Activated CD4-positive, alpha-beta T cell treated with anti-CD3 and anti-CD28 coated beads, Interleukin-2, amount 10 ng/mL, durations not matched to agents 24 days and 14 days (primary cell): ENCODE measurements at regions of chr18 and their contacts with region 1.

Region 1: DNA sequence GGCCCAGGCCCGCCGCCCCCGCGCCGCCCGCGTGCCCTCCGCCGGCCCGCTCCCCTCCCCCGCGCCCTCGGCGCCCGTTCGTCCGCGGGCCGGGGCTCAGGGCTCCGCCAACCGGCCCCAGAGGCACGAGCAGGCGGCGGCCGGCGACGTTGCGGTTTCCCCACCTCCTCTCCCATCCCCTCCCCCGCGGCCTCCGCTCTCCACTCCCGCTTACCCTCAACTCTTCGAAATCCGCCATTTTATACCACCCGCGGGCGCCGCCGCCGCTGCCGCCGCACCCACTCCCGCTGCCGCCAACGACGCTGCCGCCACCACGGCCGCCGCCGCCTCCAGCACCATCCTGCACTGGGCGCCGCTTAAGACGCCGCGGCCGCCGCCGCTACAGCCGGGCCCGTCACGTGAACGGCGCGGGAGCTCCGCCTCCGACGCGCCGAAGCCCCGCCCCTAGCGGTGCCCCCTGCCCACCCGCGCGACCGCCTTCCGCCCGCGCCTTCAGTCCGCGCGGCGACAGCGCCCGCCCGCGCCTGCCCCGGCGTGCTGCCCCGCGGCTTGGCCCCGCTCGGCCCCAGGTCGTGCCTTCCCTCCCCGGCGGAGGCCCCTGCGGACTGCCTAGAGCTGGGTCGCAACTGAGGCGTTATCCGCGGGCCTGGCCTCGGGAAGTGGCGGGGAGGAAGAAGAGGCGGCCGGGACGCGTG is at the starts of genes KATNAL2 and PIAS2:
- DNase-seq: peak; percentile 93
- H3K4me3 Mint-ChIP-seq: peak within 1 kb of the TSS; percentile 93
- H3K27ac Mint-ChIP-seq: peak within 1 kb of the TSS; percentile 90
- H3K4me1 Mint-ChIP-seq: peaks cover 42% of the 10 kb centered on the region
- H3K27me3 Mint-ChIP-seq: peaks cover 13% of the 10 kb centered on the region
- total RNA-seq, gene KATNAL2: 0.40 TPM in 1 of 2 replicates, not detected in the other
- total RNA-seq, gene PIAS2: 33.9 and 39.3 TPM in 2 replicates

Region 2: DNA sequence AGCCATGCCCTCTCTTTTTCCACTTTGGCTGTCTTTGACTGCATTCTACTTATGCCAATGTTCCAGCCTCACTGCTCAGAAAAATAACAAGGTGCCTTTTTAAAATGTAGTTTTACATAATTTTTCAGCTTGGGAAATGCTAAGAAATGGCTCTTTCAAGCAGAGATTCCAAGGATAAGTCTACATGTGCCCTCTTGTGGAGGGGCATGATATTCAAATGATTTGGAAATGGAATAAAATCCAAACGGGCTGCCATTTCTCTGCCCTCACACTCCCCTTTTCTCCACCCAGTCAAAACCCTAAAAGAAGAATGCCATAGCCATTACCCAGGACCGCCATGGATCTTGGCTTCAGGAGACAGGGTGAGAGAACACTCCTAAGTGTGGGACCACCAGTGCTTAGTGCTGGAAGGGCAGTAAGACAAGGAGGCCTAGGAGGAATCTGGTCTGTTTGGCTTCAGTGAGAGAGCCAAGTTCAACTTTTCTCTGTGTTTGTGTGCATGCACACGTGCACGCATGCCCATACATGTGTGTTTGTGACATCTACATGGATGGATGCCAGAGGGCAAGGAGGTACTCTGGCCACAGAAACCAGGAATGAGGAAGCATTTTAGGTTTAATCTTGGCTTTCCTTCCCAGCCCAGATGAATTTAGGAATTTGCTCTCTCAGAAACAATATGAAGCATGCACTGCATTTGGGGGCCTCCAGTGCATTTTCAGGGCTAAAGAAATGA is 1476.0 kb before region 1 on chr18:
- intact Hi-C with region 1: no loop called
- DNase-seq: no peak
- H3K4me3 Mint-ChIP-seq: no peak overlapping the region
- H3K27ac Mint-ChIP-seq: no peak overlapping the region
- H3K4me1 Mint-ChIP-seq: no peaks in the 10 kb centered on the region
- H3K27me3 Mint-ChIP-seq: no peaks in the 10 kb centered on the region

Region 3: DNA sequence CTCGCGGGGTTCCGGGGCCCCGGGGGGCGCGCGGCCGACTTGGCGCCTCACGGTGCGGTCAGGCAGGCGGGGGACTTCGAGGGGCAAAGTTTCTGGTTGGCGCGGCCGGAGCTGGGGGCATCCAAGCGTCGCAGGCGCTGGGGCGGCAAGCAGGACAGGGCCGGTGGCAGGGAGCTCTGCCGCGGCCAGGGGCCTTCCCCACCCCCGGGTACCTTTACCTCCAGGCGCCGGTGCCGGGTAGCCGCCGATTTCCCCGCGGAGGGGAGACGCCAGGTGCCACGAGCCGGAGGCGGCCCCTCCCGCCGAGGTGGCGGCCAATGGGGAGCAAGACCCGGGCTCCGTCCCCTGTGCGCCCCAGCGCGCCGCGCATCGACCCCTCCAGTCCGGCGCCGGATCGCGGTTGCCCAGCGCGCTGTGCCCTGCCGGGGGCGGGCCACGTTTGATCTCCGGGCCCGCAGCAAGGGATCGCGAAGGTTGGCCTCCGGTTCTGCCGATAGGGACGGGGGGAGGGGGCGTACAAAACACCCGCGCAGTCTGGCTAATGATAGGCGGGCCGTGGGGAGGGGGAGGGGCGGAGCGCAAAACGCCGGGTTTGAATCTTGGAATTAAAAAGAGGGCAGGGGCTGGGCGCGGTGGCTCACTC is 160.6 kb before region 1 on chr18 and contains the start of gene ST8SIA5:
- intact Hi-C with region 1: loop called (anchors 5 kb)
- DNase-seq: no peak
- H3K4me3 Mint-ChIP-seq: peak within 1 kb of the TSS; percentile 73
- H3K27ac Mint-ChIP-seq: no peak within 1 kb of the TSS
- H3K4me1 Mint-ChIP-seq: peaks cover 9% of the 10 kb centered on the region
- H3K27me3 Mint-ChIP-seq: peaks cover 66% of the 10 kb centered on the region
- total RNA-seq, gene ST8SIA5: not detected in 2 replicates

Region 4: DNA sequence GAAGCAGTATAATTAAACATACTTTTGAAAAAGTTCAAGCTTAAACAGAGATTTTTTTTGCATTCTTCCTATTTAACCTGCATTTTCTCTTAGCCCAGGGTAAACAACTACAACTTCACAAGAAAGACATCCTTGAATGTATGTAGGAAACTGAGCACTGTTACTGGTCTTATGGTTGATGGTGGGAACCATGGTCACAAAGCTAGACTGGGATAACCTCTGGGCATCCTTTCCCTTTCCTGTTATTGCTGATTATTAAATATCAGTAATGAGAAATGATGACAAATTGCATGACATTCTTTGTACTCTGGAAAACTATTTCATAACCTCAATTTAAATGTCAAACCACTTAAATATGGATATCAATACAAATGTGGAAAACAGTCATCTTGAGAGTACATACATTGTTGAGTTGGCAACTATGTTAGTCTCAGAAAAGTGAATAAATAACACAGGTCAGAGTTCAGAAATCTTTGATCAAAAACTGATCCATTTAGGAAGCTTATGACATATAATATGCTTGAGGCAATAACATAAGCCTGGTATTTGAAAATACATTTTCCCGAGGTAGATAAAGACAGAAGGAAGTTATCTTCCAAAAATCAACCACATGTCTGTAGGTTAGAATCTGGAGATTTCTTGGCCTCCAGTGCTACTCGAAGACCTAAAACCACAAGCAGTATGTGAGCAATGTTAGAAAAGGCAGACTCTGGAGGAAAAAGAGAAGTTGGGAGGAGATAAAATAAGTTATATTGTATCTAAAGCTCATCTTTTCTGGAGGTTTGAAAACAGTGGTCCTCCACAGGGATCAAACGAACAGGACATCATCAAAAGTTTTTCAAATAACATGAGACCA is 95.2 kb before region 1 on chr18:
- intact Hi-C with region 1: loop called (anchors 5 kb)
- DNase-seq: no peak
- H3K4me3 Mint-ChIP-seq: peak overlapping the region; percentile 13
- H3K27ac Mint-ChIP-seq: peak overlapping the region; percentile 78
- H3K4me1 Mint-ChIP-seq: peaks cover 11% of the 10 kb centered on the region
- H3K27me3 Mint-ChIP-seq: no peaks in the 10 kb centered on the region

Region 5: GRCh38 chr18:46891742-46892214 is 25.5 kb before region 1 on chr18:
- intact Hi-C with region 1: loop called (anchors 2 kb)
- DNase-seq: peak; percentile 55
- H3K4me3 Mint-ChIP-seq: no peak overlapping the region
- H3K27ac Mint-ChIP-seq: peak overlapping the region; percentile 21
- H3K4me1 Mint-ChIP-seq: peaks cover 20% of the 10 kb centered on the region
- H3K27me3 Mint-ChIP-seq: no peaks in the 10 kb centered on the region

Region 6: GRCh38 chr18:46946656-46947282 is 29.5 kb after region 1 on chr18:
- intact Hi-C with region 1: loop called (anchors 2 kb)
- DNase-seq: peak; percentile 88
- H3K4me3 Mint-ChIP-seq: no peak overlapping the region
- H3K27ac Mint-ChIP-seq: no peak overlapping the region
- H3K4me1 Mint-ChIP-seq: no peaks in the 10 kb centered on the region
- H3K27me3 Mint-ChIP-seq: peaks cover 12% of the 10 kb centered on the region

Region 7: DNA sequence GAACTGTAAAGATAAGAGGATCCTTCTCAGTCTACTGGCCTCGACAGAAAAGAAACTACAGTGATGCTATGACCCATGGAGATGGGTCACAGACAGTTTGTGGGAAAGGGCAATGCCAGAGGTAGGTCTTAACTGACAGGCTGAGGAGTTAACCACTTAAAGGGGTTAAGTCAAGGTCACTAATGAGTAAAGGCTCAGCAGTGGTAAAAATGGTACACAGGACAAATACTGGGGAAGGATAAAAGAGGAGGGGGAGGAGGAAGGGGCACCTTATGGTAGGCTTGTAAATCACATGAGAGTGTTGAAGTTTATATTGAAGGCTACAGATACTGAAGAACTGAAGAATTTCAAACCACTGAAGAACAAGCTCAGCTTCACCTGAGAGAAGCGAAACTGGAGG is 249.0 kb after region 1 on chr18:
- intact Hi-C with region 1: no loop called
- DNase-seq: no peak
- H3K4me3 Mint-ChIP-seq: no peak overlapping the region
- H3K27ac Mint-ChIP-seq: no peak overlapping the region
- H3K4me1 Mint-ChIP-seq: peaks cover 24% of the 10 kb centered on the region
- H3K27me3 Mint-ChIP-seq: no peaks in the 10 kb centered on the region

Region 8: GRCh38 chr18:47595815-47596496 is 678.7 kb after region 1 on chr18:
- intact Hi-C with region 1: no loop called
- DNase-seq: peak; percentile 60
- H3K4me3 Mint-ChIP-seq: no peak overlapping the region
- H3K27ac Mint-ChIP-seq: no peak overlapping the region
- H3K4me1 Mint-ChIP-seq: peaks cover 1% of the 10 kb centered on the region
- H3K27me3 Mint-ChIP-seq: peaks cover 15% of the 10 kb centered on the region